Natural killer cell (primary cell): ENCODE measurements at regions of chr15 and their contacts with region 1.

Region 1: DNA sequence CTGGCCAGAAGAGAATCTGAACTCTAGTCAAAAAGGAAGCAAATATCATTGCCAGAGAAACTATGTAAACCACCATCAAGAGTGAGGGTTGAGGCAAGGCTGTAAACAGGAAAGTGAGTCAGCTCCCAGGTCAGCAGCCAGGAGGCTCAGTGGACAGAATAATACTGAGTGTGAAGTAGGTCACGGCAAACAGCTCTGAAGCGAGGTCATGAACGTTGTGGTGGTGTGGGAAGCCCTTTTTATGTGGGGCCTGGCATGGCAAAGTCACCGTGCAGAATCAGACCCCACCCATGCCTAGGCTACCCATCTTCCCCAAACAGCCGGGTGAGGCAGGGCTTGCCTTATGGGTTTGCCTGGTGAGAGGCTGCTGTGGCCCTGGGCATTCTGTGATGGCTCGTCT is 43.9 kb downstream of the THBS1 start:
- DNase-seq: peak; percentile 75 to 87
- ATAC-seq: peak; percentile 57 to 83 (median 77)
- H3K4me3 ChIP-seq: no peak overlapping the region
- H3K4me3 Mint-ChIP-seq: peak overlapping the region; percentile 97
- H3K27ac ChIP-seq: peak overlapping the region; percentile 100
- H3K27ac Mint-ChIP-seq: peak overlapping the region; percentile 100
- H3K4me1 ChIP-seq: peaks cover 75% of the 10 kb centered on the region
- H3K4me1 Mint-ChIP-seq: peaks cover 92 to 93% of the 10 kb centered on the region in 2 donors
- H3K27me3 ChIP-seq: no peaks in the 10 kb centered on the region
- H3K27me3 Mint-ChIP-seq: no peaks in the 10 kb centered on the region
- CTCF ChIP-seq: no peak

Region 2: GRCh38 chr15:38576837-38577236 is 1048.0 kb before region 1 on chr15:
- intact Hi-C with region 1: loop called (anchors 10 kb)
- DNase-seq: peak in 1 of 2 donors; percentile 67
- ATAC-seq: peak; percentile 87 to 96 (median 92)
- H3K4me3 ChIP-seq: no peak overlapping the region
- H3K4me3 Mint-ChIP-seq: peak overlapping the region; percentile 78
- H3K27ac ChIP-seq: peak overlapping the region; percentile 77
- H3K27ac Mint-ChIP-seq: peak overlapping the region; percentile 83 to 88
- H3K4me1 ChIP-seq: peaks cover 29% of the 10 kb centered on the region
- H3K4me1 Mint-ChIP-seq: peaks cover 45 to 55% of the 10 kb centered on the region in 2 donors
- H3K27me3 ChIP-seq: no peaks in the 10 kb centered on the region
- H3K27me3 Mint-ChIP-seq: peaks cover 0 to 3% of the 10 kb centered on the region in 2 donors
- CTCF ChIP-seq: no peak

Region 3: DNA sequence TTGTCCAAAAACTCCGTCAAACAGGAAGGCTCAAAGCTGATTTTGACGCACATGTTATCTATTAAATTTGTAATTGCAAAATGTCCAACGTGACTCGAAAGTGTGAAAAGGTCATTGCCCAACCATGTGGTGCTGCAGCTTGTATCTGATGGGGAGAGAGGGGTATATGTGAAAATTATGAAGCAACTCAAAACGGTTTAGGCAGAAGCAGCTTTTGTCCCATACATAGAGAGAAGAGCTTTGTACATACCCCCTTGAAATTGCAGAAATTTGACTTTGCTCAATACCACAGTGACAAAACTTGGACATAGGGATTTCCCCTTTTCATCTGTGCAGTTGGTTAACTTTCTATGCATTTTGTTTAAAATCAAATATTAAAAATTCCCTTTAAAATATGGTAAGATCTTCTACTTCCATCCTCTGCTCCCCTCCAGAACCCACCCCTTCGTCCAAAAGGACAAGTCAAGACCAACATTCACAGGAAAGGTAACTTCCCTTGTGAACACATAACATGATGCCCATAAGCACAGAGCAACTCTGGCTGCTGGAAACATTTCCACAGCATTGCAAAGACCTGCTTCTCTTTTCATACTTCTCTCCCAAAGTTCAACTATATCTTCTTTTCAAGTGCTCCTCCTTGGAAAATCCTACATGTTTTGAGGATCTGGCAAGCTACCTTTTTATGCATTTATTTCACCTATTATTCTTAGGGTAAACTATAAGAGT is 297.6 kb before region 1 on chr15:
- intact Hi-C with region 1: no loop called
- DNase-seq: no peak
- ATAC-seq: peak in 1 of 3 donors; percentile 82
- H3K4me3 ChIP-seq: no peak overlapping the region
- H3K4me3 Mint-ChIP-seq: no peak overlapping the region
- H3K27ac ChIP-seq: no peak overlapping the region
- H3K27ac Mint-ChIP-seq: no peak overlapping the region
- H3K4me1 ChIP-seq: no peaks in the 10 kb centered on the region
- H3K4me1 Mint-ChIP-seq: no peaks in the 10 kb centered on the region
- H3K27me3 ChIP-seq: peaks cover 4% of the 10 kb centered on the region
- H3K27me3 Mint-ChIP-seq: peaks cover 26 to 35% of the 10 kb centered on the region in 2 donors
- CTCF ChIP-seq: no peak

Region 4: DNA sequence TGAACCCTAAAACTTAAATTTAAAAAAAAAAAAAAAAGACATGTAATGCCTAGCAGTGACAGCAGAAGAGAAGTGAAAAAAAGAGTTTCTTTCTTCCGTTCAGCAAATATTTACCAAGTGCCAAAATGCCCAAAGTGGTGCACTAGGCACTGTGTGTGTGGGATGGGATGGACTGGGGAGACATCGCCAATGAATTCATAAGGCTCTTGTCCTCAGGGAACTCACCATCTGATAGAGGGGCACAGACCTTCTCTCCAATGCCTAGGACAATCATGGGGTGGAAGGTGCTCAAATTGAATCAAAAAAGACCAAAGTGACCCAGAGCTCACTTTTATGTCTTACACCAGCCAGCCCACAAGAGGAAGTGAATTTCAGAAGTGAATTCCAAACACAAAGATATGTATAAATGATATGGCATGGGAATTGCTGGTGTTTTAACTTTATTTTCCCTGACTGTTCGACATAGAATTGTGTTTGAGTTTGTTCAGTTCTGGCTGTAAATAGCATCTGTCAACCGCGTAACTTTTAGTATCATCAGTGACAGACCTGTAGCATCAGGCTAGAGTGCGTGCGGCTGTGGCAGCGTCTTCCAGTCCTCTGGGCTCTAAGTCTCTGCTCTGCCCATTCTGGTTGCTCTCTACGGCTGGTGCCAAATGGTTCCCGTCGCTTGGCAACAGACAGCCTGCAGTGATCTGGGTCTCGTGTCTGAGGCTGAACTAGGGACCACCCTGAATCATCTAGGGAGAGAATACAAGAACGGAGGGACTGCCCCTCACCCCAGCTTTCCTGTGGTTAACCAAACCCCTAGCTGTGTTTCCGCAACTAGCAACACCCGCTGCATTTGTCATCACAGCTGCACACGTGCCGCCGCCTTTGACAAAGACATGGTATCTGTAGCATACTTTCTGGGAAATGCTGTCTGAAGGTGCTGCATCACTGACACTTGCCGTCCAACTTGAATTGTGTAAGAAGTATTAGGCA is 198.0 kb before region 1 on chr15:
- intact Hi-C with region 1: loop called (anchors 2 kb)
- DNase-seq: peak; percentile 81 to 86
- ATAC-seq: peak; percentile 87 to 91 (median 91)
- H3K4me3 ChIP-seq: peak overlapping the region; percentile 2
- H3K4me3 Mint-ChIP-seq: peak overlapping the region; percentile 80
- H3K27ac ChIP-seq: peak overlapping the region; percentile 12
- H3K27ac Mint-ChIP-seq: peak overlapping the region; percentile 85 to 90
- H3K4me1 ChIP-seq: peaks cover 23% of the 10 kb centered on the region
- H3K4me1 Mint-ChIP-seq: peaks cover 25 to 26% of the 10 kb centered on the region in 2 donors
- H3K27me3 ChIP-seq: peaks cover 18% of the 10 kb centered on the region
- H3K27me3 Mint-ChIP-seq: peaks cover 33 to 35% of the 10 kb centered on the region in 2 donors
- CTCF ChIP-seq: no peak

Region 5: GRCh38 chr15:39598958-39599845 is 25.6 kb before region 1 on chr15:
- intact Hi-C with region 1: no loop called
- DNase-seq: no peak
- ATAC-seq: no peak
- H3K4me3 ChIP-seq: no peak overlapping the region
- H3K4me3 Mint-ChIP-seq: no peak overlapping the region
- H3K27ac ChIP-seq: no peak overlapping the region
- H3K27ac Mint-ChIP-seq: no peak overlapping the region
- H3K4me1 ChIP-seq: no peaks in the 10 kb centered on the region
- H3K4me1 Mint-ChIP-seq: peaks cover 11 to 27% of the 10 kb centered on the region in 2 donors
- H3K27me3 ChIP-seq: no peaks in the 10 kb centered on the region
- H3K27me3 Mint-ChIP-seq: no peaks in the 10 kb centered on the region
- CTCF ChIP-seq: no peak

Region 6: DNA sequence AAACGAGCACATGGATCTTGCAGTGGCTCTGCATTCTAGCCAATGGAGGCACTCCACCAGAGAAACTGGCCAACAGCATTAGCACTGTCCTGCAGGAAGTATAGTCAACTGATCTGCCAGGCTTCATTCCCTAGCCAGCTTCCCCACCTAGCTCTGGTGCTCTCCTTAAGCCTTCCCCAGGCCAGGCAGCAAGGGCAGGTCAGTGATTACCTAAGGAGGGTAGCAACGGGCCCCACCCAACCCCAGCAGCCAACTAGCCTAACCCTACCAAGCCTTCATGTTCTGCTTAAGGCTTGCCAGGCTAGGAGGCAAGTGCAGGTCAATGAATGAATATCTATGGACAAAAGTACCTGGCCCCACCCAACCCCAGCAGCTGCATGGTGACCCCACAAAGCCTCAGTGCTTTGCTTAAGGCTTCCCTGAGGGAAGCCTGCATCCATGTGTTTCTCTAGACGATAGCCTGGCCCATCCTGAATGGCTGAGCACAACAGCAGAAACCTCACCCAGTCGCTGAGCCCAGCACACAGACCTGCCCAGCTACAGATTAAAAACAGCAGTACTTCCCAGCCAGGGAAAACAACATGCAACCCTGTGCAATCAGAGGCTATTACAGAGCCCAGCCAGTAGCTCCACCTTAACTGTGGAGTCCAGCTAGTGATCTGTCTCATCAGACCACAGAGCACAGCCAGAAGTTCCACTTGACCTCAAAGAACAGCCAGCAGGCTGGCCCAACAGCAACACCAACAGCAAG is 15.5 kb before region 1 on chr15:
- intact Hi-C with region 1: loop called (anchors 2 kb)
- DNase-seq: no peak
- ATAC-seq: no peak
- H3K4me3 ChIP-seq: no peak overlapping the region
- H3K4me3 Mint-ChIP-seq: peak overlapping the region; percentile 68
- H3K27ac ChIP-seq: peak overlapping the region; percentile 55
- H3K27ac Mint-ChIP-seq: peak overlapping the region; percentile 90 to 91
- H3K4me1 ChIP-seq: peaks cover 14% of the 10 kb centered on the region
- H3K4me1 Mint-ChIP-seq: peaks cover 44 to 47% of the 10 kb centered on the region in 2 donors
- H3K27me3 ChIP-seq: no peaks in the 10 kb centered on the region
- H3K27me3 Mint-ChIP-seq: no peaks in the 10 kb centered on the region
- CTCF ChIP-seq: no peak

Region 7: GRCh38 chr15:39717134-39717533 is 92.3 kb after region 1 on chr15:
- intact Hi-C with region 1: loop called (anchors 2 kb)
- DNase-seq: peak in 1 of 2 donors; percentile 5
- ATAC-seq: no peak
- H3K4me3 ChIP-seq: no peak overlapping the region
- H3K4me3 Mint-ChIP-seq: no peak overlapping the region
- H3K27ac ChIP-seq: no peak overlapping the region
- H3K27ac Mint-ChIP-seq: peak overlapping the region; percentile 71 to 80
- H3K4me1 ChIP-seq: peaks cover 9% of the 10 kb centered on the region
- H3K4me1 Mint-ChIP-seq: peaks cover 44 to 45% of the 10 kb centered on the region in 2 donors
- H3K27me3 ChIP-seq: no peaks in the 10 kb centered on the region
- H3K27me3 Mint-ChIP-seq: no peaks in the 10 kb centered on the region
- CTCF ChIP-seq: no peak

Region 8: DNA sequence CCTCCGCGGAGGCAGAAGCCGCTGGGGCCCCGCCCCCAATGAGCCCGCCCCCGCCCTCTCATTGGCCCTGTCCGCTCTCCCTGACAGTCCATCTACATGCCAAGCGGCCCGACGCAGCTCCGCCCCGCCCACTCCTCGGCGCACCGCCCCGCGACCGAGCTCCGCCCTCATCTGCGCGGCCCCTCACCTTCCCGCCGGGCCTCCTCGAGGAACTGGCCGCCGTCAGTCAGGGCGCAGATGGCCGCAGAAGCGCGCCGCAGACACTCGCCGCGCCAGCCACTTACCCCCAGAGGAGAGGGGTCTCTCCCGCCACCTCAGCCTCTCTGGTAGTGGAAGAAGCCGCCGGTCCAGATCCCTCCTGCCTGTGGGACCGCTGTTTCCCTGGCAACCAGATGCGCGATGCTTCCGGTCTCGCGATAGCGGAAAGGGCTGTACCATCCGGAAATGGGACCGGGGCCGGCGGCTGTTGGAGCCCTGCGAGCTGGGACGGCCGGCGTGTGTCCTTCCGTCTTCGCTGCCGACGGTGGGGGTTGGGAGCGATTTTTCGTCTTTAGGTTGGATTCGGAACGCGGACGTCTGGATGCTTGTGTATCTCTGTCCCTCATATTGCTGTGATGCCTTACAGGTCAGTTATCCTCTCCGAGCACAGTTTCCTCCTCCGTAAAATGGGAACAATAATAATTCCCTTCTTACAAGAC is 157.8 kb after region 1 on chr15 and contains the start of gene FSIP1:
- intact Hi-C with region 1: loop called (anchors 2 kb)
- DNase-seq: peak; percentile 97 to 98
- ATAC-seq: peak; percentile 97 to 100 (median 98)
- H3K4me3 ChIP-seq: peak within 1 kb of the TSS; percentile 73
- H3K4me3 Mint-ChIP-seq: peak within 1 kb of the TSS; percentile 77
- H3K27ac ChIP-seq: peak within 1 kb of the TSS; percentile 71
- H3K27ac Mint-ChIP-seq: peak within 1 kb of the TSS; percentile 84 to 93
- H3K4me1 ChIP-seq: peaks cover 3% of the 10 kb centered on the region
- H3K4me1 Mint-ChIP-seq: peaks cover 33 to 36% of the 10 kb centered on the region in 2 donors
- H3K27me3 ChIP-seq: no peaks in the 10 kb centered on the region
- H3K27me3 Mint-ChIP-seq: peaks cover 0 to 13% of the 10 kb centered on the region in 2 donors
- CTCF ChIP-seq: no peak
- total RNA-seq, gene FSIP1: 1.1 to 2.3 (median 1.8) TPM